ENCODE measurements at regions of chr12 and their contacts with region 1.

Region 1: GRCh38 chr12:71685914-71686665 is at the start of gene TMEM19:
- DNase-seq: peak; percentile 76 to 92 (median 83)
- ATAC-seq: peak; percentile 91
- H3K4me3 Mint-ChIP-seq: peak within 1 kb of the TSS; percentile 89 to 100 (median 94)
- H3K27ac Mint-ChIP-seq: peak within 1 kb of the TSS; percentile 87 to 98 (median 94)
- H3K4me1 Mint-ChIP-seq: peaks cover 10 to 45% (median 28%) of the 10 kb centered on the region in 4 donors
- H3K27me3 Mint-ChIP-seq: no peaks in the 10 kb centered on the region
- polyA plus RNA-seq, gene TMEM19: 40.1 to 53.8 (median 43.5) TPM

Region 2: DNA sequence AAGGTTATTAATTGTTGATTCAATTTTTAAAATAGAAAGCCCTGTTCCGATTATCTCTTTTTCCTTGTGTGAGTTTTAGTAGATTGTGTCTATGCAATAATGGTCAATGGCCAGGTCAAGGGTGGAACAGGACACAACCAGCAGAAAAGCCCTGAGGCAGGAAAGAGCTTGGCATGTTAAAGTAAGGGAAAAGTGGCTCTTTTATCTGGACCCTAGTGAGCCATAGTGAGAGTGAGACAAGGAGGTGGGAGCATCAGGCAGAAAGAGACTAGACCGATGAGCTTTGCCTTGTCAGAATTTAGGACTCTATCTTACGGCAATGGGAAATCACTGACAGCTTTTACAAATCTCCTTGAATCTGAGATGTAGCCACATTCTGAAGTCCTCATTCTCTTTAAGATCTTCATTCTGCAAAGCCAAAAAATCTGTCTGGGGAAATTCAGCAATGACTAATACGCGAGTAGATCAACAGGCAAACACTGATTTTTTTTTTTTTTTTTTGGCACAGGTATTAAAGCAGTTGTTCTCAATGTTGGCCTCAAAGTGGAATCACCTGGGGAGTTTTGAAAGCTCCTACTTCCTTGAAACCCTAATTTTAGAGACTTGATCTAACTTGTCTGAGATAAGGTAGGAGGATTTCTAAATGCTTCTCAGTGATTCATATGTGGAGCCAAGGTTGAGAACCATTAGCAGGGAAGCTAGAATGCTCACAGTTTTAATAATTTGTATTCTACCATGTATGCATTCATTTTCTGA is 33.7 kb after region 1 on chr12:
- POLR2A ChIA-PET with region 1: no interaction called
- DNase-seq: no peak
- ATAC-seq: no peak
- H3K4me3 Mint-ChIP-seq: no peak overlapping the region
- H3K27ac Mint-ChIP-seq: no peak overlapping the region
- H3K4me1 Mint-ChIP-seq: no peaks in the 10 kb centered on the region
- H3K27me3 Mint-ChIP-seq: peaks cover 0 to 2% (median 1%) of the 10 kb centered on the region in 5 donors

Region 3: GRCh38 chr12:71840231-71840847 is 154.2 kb after region 1 on chr12:
- POLR2A ChIA-PET with region 1: interaction called, 18 read pairs
- DNase-seq: peak in 3 of 10 donors; percentile 5 to 62 (median 28)
- ATAC-seq: peak; percentile 20 to 42
- H3K4me3 Mint-ChIP-seq: peak overlapping the region; percentile 86 to 100 (median 94)
- H3K27ac Mint-ChIP-seq: peak overlapping the region; percentile 95 to 100 (median 98)
- H3K4me1 Mint-ChIP-seq: peaks cover 24 to 52% (median 45%) of the 10 kb centered on the region in 4 donors
- H3K27me3 Mint-ChIP-seq: peaks cover 0 to 1% (median 0%) of the 10 kb centered on the region in 5 donors